ENCODE measurements at regions of chr5 and their contacts with region 1.

Region 1: DNA sequence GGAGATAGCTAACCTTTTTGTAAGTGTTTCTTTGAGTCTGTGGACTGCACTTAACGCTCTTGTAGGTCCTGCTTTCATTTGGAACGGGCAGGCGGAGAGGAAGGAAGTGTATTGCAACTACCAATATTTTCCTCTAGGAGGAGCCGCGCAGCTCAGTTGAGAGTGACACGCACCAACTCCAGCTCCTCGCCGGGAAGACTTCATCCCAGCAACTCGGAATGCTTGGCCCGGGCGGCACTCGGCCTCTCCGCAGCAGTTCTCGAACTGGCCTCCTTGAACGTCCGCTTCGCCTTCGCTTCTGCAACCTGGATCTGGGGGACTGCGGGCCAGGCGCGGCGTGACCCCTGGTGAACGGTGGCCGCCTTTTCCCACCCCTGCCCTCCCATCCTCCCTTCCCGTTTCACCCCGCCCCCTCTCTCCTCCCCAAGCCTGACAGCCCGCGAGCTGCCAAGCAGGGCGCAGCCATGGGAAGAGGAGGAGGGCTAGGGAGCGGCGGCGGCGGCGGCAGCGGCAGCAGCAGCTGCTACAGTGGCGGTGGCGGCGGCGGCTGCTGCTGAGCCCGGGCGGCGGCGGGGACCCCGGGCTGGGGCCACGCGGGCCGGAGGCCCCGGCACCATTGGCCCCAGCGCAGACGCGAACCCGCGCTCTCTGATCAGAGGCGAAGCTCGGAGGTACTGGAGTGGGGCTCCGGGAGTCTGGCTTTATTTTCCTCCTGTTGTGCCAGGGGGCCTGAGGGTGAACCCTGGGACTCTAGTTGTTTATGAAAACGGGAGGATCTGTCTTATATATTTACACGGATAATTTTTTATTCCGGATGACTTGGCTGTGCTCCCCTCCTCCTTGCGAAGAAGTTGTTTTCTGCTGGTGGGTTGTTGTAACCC is at the start of gene GHR:
- DNase-seq: peak; percentile 78 to 89
- ATAC-seq: peak; percentile 92 to 97 (median 95)
- H3K4me3 ChIP-seq: peak within 1 kb of the TSS; percentile 42 to 77 (median 71)
- H3K27ac ChIP-seq: peak within 1 kb of the TSS; percentile 51 to 95 (median 88)
- H3K4me1 ChIP-seq: peaks cover 0 to 32% (median 11%) of the 10 kb centered on the region in 9 donors
- H3K27me3 ChIP-seq: peaks cover 0 to 12% (median 0%) of the 10 kb centered on the region in 7 donors
- CTCF ChIP-seq: peak; percentile 74 to 94 (median 79)
- total RNA-seq, gene GHR: 8.1 to 15.1 (median 12.3) TPM

Region 2: DNA sequence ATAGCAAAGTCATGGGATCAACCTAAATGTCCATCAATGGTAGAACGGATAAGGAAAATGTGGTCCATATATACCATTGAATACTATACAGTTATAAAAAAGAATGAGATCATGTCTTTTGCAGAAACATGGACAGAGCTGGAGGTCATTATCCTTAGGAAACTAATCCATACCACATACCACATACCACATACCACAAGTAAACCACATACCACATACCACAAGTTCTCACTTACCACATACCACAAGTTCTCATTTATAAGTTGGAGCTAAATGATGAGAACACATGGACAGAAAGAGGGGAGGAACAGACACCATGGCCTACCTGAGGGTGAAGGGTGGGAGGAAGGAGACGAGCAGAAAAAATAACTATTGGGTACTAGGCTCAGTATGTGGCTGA is 154.9 kb before region 1 on chr5:
- intact Hi-C with region 1: no loop called
- DNase-seq: no peak
- ATAC-seq: no peak
- H3K4me3 ChIP-seq: no peak overlapping the region
- H3K27ac ChIP-seq: no peak overlapping the region
- H3K4me1 ChIP-seq: no peaks in the 10 kb centered on the region
- H3K27me3 ChIP-seq: no peaks in the 10 kb centered on the region
- CTCF ChIP-seq: no peak

Region 3: DNA sequence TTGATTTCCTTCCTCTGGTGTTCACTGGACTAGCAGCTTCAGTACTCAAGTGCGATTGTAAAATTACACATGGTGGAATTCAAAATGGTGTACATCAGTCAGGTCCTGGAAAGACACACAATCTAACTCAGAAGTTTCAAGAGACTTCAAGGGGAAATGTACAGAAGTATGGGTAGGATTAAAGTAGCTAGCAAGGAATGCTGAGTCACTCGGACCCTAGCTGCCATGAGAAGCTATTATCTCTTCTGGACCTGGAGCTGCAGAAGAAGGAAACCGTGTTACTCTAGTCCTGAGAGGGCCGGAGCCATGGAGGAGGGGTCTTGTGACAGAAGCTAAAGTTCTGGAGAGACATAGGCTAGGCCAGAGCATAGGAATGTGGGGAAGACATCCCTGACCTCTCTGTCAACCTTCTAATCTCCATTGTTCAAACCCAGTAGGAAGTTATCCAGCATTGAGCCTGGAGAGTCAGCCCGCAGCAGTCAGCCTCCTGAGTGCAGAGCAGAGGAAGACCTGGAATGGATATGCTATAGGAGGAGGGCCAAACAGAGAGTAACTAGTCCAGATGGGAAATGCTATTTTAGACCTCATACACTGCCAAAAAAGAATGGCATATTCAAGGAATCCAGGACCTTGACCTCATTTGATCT is 84.0 kb after region 1 on chr5:
- intact Hi-C with region 1: loop called in 1 of 10 experiments (anchors 5 kb)
- DNase-seq: no peak
- ATAC-seq: peak; percentile 51 to 77 (median 68)
- H3K4me3 ChIP-seq: no peak overlapping the region
- H3K27ac ChIP-seq: peak overlapping the region in 4 of 10 donors; percentile 20 to 38 (median 33)
- H3K4me1 ChIP-seq: peaks cover 0 to 67% (median 25%) of the 10 kb centered on the region in 9 donors
- H3K27me3 ChIP-seq: no peaks in the 10 kb centered on the region
- CTCF ChIP-seq: no peak

Region 4: GRCh38 chr5:42583322-42583721 is 159.8 kb after region 1 on chr5:
- intact Hi-C with region 1: loop called (anchors 1 to 10 kb)
- DNase-seq: peak; percentile 22 to 72
- ATAC-seq: peak in 6 of 8 donors; percentile 26 to 47 (median 38)
- H3K4me3 ChIP-seq: no peak overlapping the region
- H3K27ac ChIP-seq: no peak overlapping the region
- H3K4me1 ChIP-seq: peaks cover 0 to 48% (median 28%) of the 10 kb centered on the region in 9 donors
- H3K27me3 ChIP-seq: no peaks in the 10 kb centered on the region
- CTCF ChIP-seq: peak; percentile 68 to 87 (median 80)

Region 5: GRCh38 chr5:42656651-42657015 is 233.1 kb after region 1 on chr5:
- intact Hi-C with region 1: loop called in 8 of 10 experiments (anchors 2 to 10 kb)
- DNase-seq: no peak
- ATAC-seq: peak in 4 of 8 donors; percentile 56 to 70 (median 65)
- H3K4me3 ChIP-seq: peak overlapping the region in 5 of 10 donors; percentile 15 to 35 (median 29)
- H3K27ac ChIP-seq: no peak overlapping the region
- H3K4me1 ChIP-seq: peaks cover 0 to 29% (median 25%) of the 10 kb centered on the region in 9 donors
- H3K27me3 ChIP-seq: no peaks in the 10 kb centered on the region
- CTCF ChIP-seq: peak in 7 of 9 donors; percentile 21 to 58 (median 47)

Region 6: DNA sequence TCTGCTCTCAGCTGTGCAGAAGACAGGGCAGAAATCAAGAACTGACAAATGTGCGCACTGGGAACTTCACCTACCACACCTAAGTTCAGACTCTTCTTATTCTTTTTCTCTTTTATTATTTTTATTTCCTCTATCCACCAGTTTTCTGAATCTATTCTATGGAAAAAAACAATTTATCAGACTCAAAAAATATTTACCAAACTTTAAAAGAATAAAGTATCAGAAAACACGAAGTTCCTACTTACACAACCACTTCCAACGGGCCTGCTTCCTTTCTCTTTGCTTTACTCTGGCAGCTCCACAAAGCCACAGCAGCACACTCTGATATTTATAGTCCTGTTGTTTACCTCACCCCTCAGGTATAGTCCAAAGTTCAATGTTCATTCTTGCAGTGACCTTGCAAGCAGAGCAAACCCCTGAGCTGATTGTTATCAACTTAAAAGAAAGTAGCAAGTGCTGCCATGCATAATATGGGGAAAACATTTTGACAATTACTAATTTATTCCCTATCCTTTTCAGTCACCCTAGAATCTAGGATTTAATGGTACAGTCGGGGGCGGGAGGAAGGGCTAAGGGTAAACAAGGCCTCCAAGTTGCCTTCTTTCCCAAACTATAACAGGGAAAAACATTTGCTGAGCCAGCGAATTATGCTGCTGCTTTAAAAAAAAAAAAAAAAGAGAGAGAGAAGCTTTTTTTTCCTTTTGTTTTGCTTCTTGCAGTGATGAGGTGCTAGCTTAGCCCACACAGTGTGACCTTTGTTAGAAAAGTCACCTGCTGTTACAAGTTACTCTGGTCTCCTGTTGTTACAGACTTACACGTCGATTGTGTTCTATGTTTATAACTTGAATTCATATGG is 388.3 kb after region 1 on chr5 and contains the start of gene SELENOP:
- intact Hi-C with region 1: no loop called
- DNase-seq: peak in 1 of 2 donors; percentile 84
- ATAC-seq: peak; percentile 92 to 97 (median 96)
- H3K4me3 ChIP-seq: peak within 1 kb of the TSS; percentile 38 to 67 (median 60)
- H3K27ac ChIP-seq: peak within 1 kb of the TSS; percentile 62 to 93 (median 84)
- H3K4me1 ChIP-seq: peaks cover 0 to 52% (median 35%) of the 10 kb centered on the region in 9 donors
- H3K27me3 ChIP-seq: no peaks in the 10 kb centered on the region
- CTCF ChIP-seq: no peak
- total RNA-seq, gene SELENOP: 149 to 373 (median 181) TPM

Measured in heart right ventricle (tissue), 16 donors.